Left colon (tissue), 2 donors: ENCODE measurements at regions of chr1 and their contacts with region 1.

Region 1: GRCh38 chr1:29793101-29793546 is 556.8 kb downstream of the PTPRU start:
- DNase-seq: peak; percentile 58 to 85
- ATAC-seq: peak; percentile 82

Region 2: GRCh38 chr1:29655945-29656850 is 136.9 kb before region 1 on chr1:
- intact Hi-C with region 1: no loop called
- DNase-seq: no peak
- ATAC-seq: no peak

Region 3: GRCh38 chr1:30111431-30111830 is 318.3 kb after region 1 on chr1:
- intact Hi-C with region 1: loop called in 1 of 2 experiments (anchors 5 kb)
- DNase-seq: peak in 1 of 2 donors; percentile 62
- ATAC-seq: peak; percentile 83